ENCODE measurements at regions of chr16 and their contacts with region 1.

Region 1: GRCh38 chr16:56356276-56357240 is 68.8 kb downstream of the AMFR start:
- DNase-seq: peak; percentile 57
- ATAC-seq: peak; percentile 92
- H3K4me3 Mint-ChIP-seq: peak overlapping the region; percentile 80
- H3K27ac Mint-ChIP-seq: peak overlapping the region; percentile 42
- H3K4me1 Mint-ChIP-seq: peaks cover 18% of the 10 kb centered on the region
- H3K27me3 Mint-ChIP-seq: no peaks in the 10 kb centered on the region
- CTCF ChIP-seq: peak; percentile 61

Region 2: GRCh38 chr16:55944377-55944802 is 412.2 kb before region 1 on chr16:
- CTCF ChIA-PET with region 1: interaction called, 7 read pairs
- POLR2A ChIA-PET with region 1: no interaction called
- intact Hi-C with region 1: loop called (anchors 1 kb)
- DNase-seq: peak; percentile 34
- ATAC-seq: no peak
- H3K4me3 Mint-ChIP-seq: no peak overlapping the region
- H3K27ac Mint-ChIP-seq: no peak overlapping the region
- H3K4me1 Mint-ChIP-seq: peaks cover 5% of the 10 kb centered on the region
- H3K27me3 Mint-ChIP-seq: peaks cover 22% of the 10 kb centered on the region
- CTCF ChIP-seq: peak; percentile 70

Region 3: DNA sequence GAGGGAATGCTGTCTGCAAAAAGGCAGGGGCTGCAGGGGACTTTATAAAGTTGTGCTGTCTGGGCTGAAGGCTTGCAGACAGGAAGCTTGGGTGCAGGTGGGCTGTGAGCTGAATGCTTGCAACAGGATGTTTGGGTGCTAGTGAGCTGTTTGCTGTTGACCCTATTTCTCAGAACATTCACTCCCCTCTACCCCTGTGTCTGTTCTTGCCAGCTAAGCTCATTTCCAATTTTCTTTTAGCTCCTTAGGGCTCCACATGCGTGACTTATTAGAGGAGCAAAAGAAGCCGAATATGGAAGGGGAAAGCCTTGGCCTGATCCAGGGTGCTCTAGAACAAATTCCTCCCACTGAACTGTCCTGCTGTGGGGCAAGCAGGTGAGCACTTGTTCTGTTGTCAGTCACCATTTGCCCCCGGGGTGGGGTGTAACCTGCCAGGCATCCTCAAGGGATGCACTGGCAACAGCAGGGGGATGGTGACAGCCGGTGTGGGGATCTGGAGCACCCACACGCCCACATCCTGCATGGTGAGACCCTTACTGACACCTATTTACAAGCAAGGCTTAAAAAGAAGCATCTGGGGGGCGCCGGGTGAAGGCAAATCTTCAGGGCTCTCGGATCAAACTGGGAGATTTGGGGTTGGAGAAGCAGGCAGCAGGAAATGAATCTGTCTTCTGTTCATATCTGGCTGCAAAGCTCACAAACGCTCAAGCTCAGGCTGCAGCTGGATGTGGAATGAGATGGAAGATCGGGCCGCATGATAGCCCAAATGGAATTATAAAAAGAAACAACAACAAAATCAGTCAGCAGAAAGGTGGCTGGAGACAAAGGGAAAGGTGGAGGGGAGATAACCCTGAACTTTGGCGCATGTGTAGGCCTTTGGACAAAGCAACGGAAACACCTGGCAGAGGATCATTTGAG is 352.2 kb after region 1 on chr16:
- CTCF ChIA-PET with region 1: no interaction called
- POLR2A ChIA-PET with region 1: no interaction called
- intact Hi-C with region 1: loop called (anchors 10 kb)
- DNase-seq: no peak
- ATAC-seq: no peak
- H3K4me3 Mint-ChIP-seq: no peak overlapping the region
- H3K27ac Mint-ChIP-seq: no peak overlapping the region
- H3K4me1 Mint-ChIP-seq: no peaks in the 10 kb centered on the region
- H3K27me3 Mint-ChIP-seq: peaks cover 4% of the 10 kb centered on the region
- CTCF ChIP-seq: no peak